Breast epithelium (tissue), 4 donors: ENCODE measurements at regions of chr2 and their contacts with region 1.

Region 1: DNA sequence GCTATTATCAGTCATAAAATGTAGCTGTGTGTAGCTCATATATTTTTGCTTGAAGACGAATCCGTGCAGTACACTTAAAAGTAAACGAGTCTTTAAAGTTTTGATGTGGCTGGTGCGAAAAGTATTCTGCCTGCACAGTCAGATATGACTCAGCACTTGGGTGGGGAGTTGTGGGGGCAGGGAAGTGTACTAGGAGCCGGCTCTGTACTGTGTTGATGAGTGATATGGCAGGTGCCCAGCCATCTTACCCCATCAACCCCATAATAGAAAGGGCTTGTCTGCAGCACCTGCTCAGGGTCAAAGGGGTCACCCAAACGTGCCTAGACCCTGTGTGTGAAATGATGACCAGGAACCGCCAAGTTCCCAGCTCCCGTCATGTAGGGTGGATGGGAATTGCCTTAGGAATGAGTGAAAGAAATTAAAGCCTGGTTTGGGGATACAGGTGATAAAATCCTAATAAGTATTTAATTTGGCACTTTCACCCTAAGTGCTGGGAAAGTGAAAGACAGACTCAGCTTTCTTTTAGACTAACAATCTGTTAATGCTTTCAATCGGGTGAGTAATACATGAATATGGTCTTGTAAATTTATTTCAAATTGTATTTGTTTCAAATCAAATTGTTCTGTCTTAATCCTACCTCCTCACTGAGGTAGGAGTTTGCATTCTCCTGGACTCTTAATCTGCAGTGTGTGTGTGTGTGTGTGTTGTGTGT is 48.0 kb downstream of the BCL2L11 start:
- DNase-seq: no peak
- H3K4me3 ChIP-seq: no peak overlapping the region
- H3K27ac ChIP-seq: no peak overlapping the region
- H3K4me1 ChIP-seq: no peaks in the 10 kb centered on the region
- H3K27me3 ChIP-seq: no peaks in the 10 kb centered on the region
- CTCF ChIP-seq: no peak
- POLR2A ChIP-seq: no peak

Region 2: DNA sequence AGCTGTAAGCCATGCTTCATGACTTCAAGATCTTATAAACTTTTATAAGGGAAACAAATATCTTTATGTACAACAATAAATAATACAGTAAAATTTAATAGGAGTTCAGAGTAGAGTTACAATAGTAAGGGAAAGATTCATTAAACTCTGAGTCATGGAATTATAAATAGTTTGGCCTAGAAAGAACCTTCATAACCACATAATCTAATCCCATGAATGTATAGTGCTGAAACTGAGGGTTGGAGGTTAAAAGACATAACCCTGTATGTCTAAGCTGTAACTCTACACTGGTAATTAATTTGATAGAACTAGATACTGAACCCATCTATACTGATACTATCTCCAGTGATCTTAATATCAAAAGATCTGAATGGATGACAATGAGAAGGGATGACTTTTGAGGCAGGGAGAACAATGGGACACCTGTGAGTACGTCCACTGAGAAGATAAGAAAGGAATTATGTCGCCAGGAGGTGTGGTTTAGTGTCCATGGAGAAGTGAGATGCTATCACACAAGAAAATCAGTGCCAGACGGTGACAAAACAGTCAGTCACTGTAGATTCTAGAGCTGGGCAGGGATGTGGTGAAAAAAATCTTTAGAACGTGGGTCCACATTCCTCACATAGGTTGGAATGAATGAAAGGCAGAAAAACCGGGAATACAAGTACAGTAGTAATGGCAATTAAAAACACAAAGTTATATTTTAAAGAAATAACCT is 1900.2 kb after region 1 on chr2:
- intact Hi-C with region 1: loop called (anchors 10 kb)
- DNase-seq: no peak
- H3K4me3 ChIP-seq: no peak overlapping the region
- H3K27ac ChIP-seq: no peak overlapping the region
- H3K4me1 ChIP-seq: no peaks in the 10 kb centered on the region
- H3K27me3 ChIP-seq: no peaks in the 10 kb centered on the region
- CTCF ChIP-seq: no peak
- POLR2A ChIP-seq: no peak